ENCODE measurements at regions of chr17 and their contacts with region 1.

Region 1: DNA sequence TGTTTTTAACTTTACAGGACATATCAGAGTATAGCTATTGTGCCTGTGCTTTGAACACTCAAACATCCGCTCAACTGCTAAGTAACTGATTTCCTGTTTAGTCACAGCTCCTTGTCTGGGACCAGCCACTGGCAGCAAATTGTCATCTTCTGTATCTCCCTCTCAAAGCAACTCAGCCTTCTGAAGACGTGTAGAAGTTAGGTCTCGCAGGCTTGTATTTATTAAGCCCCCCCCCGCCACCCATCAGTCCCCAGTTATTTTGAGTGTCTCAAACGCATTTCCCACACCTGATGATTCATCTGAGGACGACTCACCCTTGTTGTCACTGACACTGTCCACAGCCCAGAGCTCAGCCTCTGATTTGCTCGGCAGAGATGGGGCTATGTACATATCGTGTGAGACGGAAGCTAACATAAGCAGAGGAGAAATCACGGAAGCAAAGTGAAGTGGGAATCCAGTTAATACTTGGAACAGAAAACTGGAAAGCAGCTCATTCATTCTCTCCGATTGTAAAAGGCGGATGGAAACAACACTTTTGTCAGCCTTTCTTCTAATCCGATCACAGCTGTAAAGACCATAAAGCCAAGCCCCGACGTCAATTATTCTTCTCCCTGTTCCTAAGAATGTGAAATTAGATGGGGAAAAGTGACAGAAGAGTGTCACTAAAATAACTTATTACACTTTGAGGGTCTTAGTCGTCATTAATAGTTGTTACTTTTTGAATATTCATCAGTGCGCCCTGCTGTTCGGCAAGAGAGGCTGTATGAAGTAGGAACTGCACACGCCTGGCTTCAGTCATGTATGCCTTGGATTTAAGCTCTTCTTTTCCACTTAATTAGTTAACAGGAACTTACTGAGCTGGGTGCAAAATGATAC is 64.2 kb downstream of the PITPNC1 start:
- DNase-seq: peak; percentile 84
- ATAC-seq: peak; percentile 96
- H3K4me3 Mint-ChIP-seq: peak overlapping the region; percentile 67
- H3K27ac Mint-ChIP-seq: peak overlapping the region; percentile 94
- H3K4me1 Mint-ChIP-seq: peaks cover 71% of the 10 kb centered on the region
- H3K27me3 Mint-ChIP-seq: no peaks in the 10 kb centered on the region

Region 2: GRCh38 chr17:67390646-67391384 is 50.5 kb before region 1 on chr17:
- CTCF ChIA-PET with region 1: interaction called, 40 read pairs
- POLR2A ChIA-PET with region 1: interaction called, 33 read pairs
- DNase-seq: peak; percentile 82
- ATAC-seq: peak; percentile 91
- H3K4me3 Mint-ChIP-seq: peak overlapping the region; percentile 71
- H3K27ac Mint-ChIP-seq: peak overlapping the region; percentile 93
- H3K4me1 Mint-ChIP-seq: peaks cover 69% of the 10 kb centered on the region
- H3K27me3 Mint-ChIP-seq: no peaks in the 10 kb centered on the region

Region 3: GRCh38 chr17:67401598-67402488 is 39.4 kb before region 1 on chr17:
- CTCF ChIA-PET with region 1: interaction called, 4 read pairs
- POLR2A ChIA-PET with region 1: interaction called, 11 read pairs
- DNase-seq: no peak
- ATAC-seq: peak; percentile 48
- H3K4me3 Mint-ChIP-seq: peak overlapping the region; percentile 59
- H3K27ac Mint-ChIP-seq: peak overlapping the region; percentile 85
- H3K4me1 Mint-ChIP-seq: peaks cover 73% of the 10 kb centered on the region
- H3K27me3 Mint-ChIP-seq: no peaks in the 10 kb centered on the region

Region 4: GRCh38 chr17:67421869-67422273 is 19.4 kb before region 1 on chr17:
- CTCF ChIA-PET with region 1: interaction called, 7 read pairs
- POLR2A ChIA-PET with region 1: interaction called, 17 read pairs
- DNase-seq: peak; percentile 80
- ATAC-seq: peak; percentile 95
- H3K4me3 Mint-ChIP-seq: peak overlapping the region; percentile 51
- H3K27ac Mint-ChIP-seq: peak overlapping the region; percentile 95
- H3K4me1 Mint-ChIP-seq: peaks cover 72% of the 10 kb centered on the region
- H3K27me3 Mint-ChIP-seq: no peaks in the 10 kb centered on the region

Region 5: DNA sequence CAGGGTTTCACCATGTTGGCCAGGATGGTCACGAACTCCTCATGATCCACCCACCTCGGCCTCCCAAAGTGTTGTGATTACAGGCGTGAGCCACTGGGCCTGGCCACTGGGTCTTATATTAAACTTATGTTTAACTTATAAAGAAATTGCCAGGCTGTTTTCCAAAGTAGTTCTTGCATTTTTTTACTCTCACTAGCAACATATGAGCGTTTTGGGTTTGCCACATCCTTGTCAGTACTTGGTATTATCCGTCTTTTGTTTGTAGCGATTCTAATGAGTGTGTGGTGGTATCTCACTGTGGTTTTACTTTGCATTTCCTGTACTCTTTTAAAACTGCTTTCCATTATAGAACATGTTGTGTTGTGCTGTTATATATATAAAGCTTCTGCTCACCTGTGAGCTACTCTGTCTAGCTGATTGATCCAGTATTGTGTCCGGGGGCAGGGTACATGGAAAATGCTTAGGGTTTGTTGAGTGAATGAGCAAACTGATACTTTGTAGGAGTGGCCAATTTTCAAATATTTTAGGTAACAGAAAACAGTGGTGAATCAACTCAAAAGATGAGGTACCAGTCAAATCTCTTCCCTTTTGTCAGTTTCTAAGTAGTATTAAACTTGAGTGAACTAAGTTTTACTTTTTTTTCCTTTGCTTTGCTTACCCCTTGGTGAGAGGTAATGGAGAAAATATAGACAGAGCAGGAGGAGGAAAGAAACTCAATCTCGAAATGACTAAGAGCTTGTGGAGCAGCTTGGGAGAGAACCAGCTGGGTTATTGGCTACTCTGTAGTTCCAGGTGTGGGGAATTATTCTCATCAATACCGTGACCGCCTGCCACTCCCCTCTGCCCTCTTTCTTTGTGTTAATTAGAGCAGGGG is 11.6 kb after region 1 on chr17:
- CTCF ChIA-PET with region 1: interaction called, 43 read pairs
- POLR2A ChIA-PET with region 1: interaction called, 190 read pairs
- DNase-seq: peak; percentile 68
- ATAC-seq: peak; percentile 84
- H3K4me3 Mint-ChIP-seq: peak overlapping the region; percentile 67
- H3K27ac Mint-ChIP-seq: peak overlapping the region; percentile 96
- H3K4me1 Mint-ChIP-seq: peaks cover 88% of the 10 kb centered on the region
- H3K27me3 Mint-ChIP-seq: no peaks in the 10 kb centered on the region

Region 6: GRCh38 chr17:67469208-67469895 is 28.1 kb after region 1 on chr17:
- CTCF ChIA-PET with region 1: interaction called, 110 read pairs
- POLR2A ChIA-PET with region 1: interaction called, 124 read pairs
- DNase-seq: peak; percentile 55
- ATAC-seq: peak; percentile 70
- H3K4me3 Mint-ChIP-seq: peak overlapping the region; percentile 64
- H3K27ac Mint-ChIP-seq: peak overlapping the region; percentile 92
- H3K4me1 Mint-ChIP-seq: peaks cover 74% of the 10 kb centered on the region
- H3K27me3 Mint-ChIP-seq: no peaks in the 10 kb centered on the region

Region 7: GRCh38 chr17:67717624-67718329 is 276.5 kb after region 1 on chr17 and contains the start of gene NOL11:
- CTCF ChIA-PET with region 1: interaction called, 4 read pairs
- POLR2A ChIA-PET with region 1: interaction called, 11 read pairs
- DNase-seq: peak; percentile 99
- ATAC-seq: peak; percentile 97
- H3K4me3 Mint-ChIP-seq: peak within 1 kb of the TSS; percentile 96
- H3K27ac Mint-ChIP-seq: peak within 1 kb of the TSS; percentile 97
- H3K4me1 Mint-ChIP-seq: peaks cover 39% of the 10 kb centered on the region
- H3K27me3 Mint-ChIP-seq: no peaks in the 10 kb centered on the region
- total RNA-seq, gene NOL11: 54.0 to 55.6 TPM

Region 8: DNA sequence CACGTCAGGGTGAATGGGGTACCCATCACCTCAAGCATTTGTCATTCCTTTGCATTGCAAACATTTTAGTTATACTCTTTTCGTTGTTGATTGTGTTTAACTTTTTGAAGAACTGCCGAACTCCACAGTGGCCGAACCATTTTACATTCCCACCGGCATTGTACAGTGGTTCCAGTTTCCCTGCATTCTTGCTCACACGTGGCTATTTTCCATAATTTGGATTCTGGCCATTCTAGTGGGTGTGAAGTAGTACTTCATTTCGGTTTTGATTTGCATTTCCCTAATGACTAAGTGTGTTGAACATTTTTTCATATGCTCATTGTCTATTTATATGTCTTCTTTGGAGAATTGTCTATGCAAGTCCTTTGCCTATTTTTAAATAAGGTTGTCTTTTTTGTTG is 289.4 kb after region 1 on chr17:
- CTCF ChIA-PET with region 1: no interaction called
- POLR2A ChIA-PET with region 1: no interaction called
- DNase-seq: no peak
- ATAC-seq: no peak
- H3K4me3 Mint-ChIP-seq: no peak overlapping the region
- H3K27ac Mint-ChIP-seq: no peak overlapping the region
- H3K4me1 Mint-ChIP-seq: peaks cover 22% of the 10 kb centered on the region
- H3K27me3 Mint-ChIP-seq: no peaks in the 10 kb centered on the region

Region 9: GRCh38 chr17:67841992-67842391 is 400.7 kb after region 1 on chr17:
- CTCF ChIA-PET with region 1: no interaction called
- POLR2A ChIA-PET with region 1: no interaction called
- DNase-seq: no peak
- ATAC-seq: no peak
- H3K4me3 Mint-ChIP-seq: no peak overlapping the region
- H3K27ac Mint-ChIP-seq: no peak overlapping the region
- H3K4me1 Mint-ChIP-seq: peaks cover 13% of the 10 kb centered on the region
- H3K27me3 Mint-ChIP-seq: no peaks in the 10 kb centered on the region